ENCODE measurements at regions of chr2 and their contacts with region 1.

Region 1: DNA sequence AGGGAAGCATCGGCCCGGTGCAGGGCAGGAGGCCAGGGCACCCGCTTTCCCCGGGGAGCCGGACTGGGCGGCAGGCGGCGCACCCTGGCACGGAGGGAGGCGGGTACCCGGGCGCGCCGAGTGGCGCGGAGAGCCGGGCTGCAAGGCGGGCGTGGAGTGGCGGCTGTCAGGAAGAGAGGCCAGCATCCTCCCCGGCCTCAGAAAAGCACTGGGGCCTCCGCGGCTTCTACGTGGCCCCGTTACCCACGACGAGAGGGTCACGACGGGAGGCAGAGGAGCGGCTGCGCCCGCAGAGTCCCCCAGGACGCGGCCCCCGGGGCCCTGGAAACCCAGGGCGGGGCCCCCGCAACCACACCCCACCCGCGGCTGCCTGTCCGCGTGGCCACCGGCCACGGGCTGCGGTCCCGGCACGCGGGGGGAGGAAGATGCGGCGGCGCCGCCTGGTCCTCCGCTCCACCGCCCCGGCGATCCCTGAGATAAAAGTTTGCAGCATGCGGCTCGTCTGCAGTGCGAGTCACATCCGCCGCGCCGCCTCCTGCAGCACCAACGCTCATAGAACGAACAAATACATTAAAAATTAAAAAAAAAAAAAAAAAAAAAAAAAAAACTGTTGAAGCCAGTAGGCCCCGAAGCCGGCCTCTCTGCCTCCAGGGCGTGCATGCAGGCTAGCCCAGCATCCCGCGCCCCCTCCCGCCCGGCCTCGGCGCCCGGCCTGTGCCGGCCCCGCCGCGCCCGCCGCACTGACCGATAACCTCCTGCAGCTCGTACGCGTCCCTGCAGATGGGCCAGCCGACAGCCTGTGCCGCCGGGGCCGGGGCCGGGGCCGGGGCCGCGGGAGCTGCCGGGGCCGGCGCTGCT is 683 bp downstream of the STK39 start:
- DNase-seq: peak; percentile 68 to 97 (median 76)

Region 2: GRCh38 chr2:168136392-168136977 is 110.2 kb before region 1 on chr2:
- intact Hi-C with region 1: loop called (anchors 5 kb)
- DNase-seq: no peak

Region 3: GRCh38 chr2:168189835-168190569 is 56.7 kb before region 1 on chr2:
- intact Hi-C with region 1: loop called (anchors 10 kb)
- DNase-seq: no peak